ENCODE measurements at regions of chr3 and their contacts with region 1.

Region 1: GRCh38 chr3:46923559-46924350 is 46.2 kb downstream of the PTH1R start:
- DNase-seq: peak; percentile 77

Region 2: DNA sequence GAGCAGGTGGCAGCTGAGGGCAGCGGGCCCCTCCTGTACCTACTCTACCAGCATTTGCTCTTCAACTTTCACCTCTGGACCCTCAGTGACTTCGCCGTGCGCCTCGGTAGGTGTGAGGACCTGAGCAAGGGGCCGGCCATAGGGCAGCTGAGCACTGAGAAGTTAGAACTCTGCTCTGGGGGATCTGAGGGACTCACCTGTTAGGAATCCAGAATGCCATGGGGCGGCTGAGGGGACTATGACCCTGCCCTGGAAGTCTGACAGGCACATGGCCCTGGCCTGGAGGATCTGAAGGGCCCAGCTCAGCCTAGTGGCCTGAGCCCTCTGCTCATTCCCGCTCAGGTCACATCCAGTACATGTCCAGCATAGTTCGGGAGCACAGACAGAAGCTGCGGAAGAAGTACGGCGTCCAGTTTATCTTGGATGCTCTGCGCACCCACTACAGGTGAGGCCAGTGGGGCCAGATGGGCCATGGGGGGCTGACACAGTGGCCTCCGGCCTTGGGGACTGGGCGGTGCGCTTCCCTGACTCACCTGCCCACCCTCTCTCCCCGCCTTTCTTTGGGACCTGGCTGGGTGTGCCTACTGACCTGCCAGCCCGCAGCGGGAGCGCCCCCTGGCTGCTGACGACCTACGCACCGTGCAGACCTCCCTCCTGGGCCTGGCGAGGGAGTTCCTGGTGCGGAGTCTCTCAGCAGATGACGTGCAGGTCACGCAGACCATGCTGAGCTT is 74.5 kb after region 1 on chr3:
- intact Hi-C with region 1: loop called (anchors 1 kb)
- DNase-seq: peak; percentile 86

Measured in cardiac septum (tissue), 1 donor.